ENCODE measurements at regions of chr1 and their contacts with region 1.

Region 1: GRCh38 chr1:175742790-175743459 is 470 bp downstream of the TNR start:
- H3K4me3 ChIP-seq: no peak overlapping the region
- H3K27ac ChIP-seq: no peak overlapping the region
- H3K4me1 ChIP-seq: no peaks in the 10 kb centered on the region
- CTCF ChIP-seq: no peak

Region 2: DNA sequence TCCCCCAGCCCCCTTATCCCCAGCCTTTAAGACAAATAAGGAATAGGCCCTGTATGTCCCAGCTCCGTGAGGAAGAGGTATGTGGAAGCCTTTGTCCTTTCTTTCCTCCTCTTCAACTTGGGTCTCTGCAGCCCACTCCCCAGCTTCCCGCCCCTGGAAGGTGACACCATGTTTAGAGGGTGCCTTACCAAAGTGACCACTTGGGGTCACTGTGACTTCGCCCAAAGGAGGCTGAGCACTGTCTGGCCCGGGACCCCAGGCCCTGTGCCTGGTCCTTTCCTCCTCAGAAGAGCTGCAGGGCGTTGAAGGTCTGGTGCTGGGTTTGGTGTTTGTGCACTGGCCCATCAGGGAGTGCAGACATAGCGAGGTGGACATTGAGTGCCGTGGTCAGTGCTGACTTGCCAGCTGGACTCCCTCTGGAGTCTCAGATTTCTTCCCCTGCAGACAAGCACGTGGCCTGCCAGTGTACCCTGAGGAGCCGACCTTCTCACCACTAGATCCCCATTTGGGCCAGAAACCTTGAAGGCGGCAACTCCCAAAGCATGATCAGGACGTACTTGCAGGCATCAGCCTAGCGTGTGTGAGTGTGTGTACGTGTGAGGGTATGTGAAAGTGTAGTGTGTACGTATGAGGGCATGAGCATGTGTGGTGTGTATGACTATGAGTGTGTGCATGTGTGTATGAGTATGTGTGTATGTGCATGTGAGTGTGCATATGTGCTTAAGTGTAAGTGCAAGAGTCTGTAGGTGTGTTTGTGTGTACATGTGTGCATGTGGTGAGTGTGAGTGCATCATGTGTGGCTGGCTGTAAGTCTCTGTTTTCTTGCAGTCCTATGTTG is 368.9 kb before region 1 on chr1:
- CTCF ChIA-PET with region 1: interaction called, 23 read pairs
- POLR2A ChIA-PET with region 1: no interaction called
- H3K4me3 ChIP-seq: no peak overlapping the region
- H3K27ac ChIP-seq: no peak overlapping the region
- H3K4me1 ChIP-seq: no peaks in the 10 kb centered on the region
- CTCF ChIP-seq: peak; percentile 74

Region 3: GRCh38 chr1:175725684-175726083 is 17.2 kb before region 1 on chr1:
- CTCF ChIA-PET with region 1: interaction called, 14 read pairs
- POLR2A ChIA-PET with region 1: no interaction called
- H3K4me3 ChIP-seq: no peak overlapping the region
- H3K27ac ChIP-seq: no peak overlapping the region
- H3K4me1 ChIP-seq: no peaks in the 10 kb centered on the region
- CTCF ChIP-seq: no peak